ENCODE measurements at regions of chr11 and their contacts with region 1.

Region 1: GRCh38 chr11:63738720-63739360 is 29.7 kb downstream of the ZFTA start:
- DNase-seq: no peak
- H3K4me3 ChIP-seq: no peak overlapping the region
- CTCF ChIP-seq: peak; percentile 70

Region 2: DNA sequence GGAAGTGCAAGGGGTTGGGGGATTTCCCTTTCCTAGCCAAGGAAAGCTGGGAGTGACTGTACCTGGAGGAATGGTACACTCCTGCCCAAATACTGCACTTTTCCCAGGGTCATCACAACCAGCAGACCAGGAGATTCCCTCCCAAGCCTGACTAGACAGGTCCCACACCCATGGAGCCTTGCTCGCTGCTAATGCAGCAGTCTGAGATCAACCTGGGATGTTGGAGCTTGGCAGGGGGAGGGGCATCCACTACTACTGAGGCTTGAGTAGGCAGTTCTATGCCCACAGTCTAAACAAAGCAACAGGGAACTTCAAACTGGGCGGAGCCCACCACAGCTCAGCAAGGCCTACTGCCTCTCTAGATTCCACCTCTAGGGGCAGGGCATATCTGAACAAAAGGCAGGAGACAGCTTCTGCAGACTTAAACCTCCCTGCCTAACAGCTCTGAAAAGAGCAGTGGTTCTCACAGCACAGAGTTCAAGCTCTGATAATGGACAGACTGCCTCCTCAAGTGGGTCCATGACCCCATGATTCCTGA is 310.8 kb before region 1 on chr11:
- CTCF ChIA-PET with region 1: no interaction called
- POLR2A ChIA-PET with region 1: no interaction called
- DNase-seq: no peak
- H3K4me3 ChIP-seq: no peak overlapping the region
- CTCF ChIP-seq: no peak

Region 3: GRCh38 chr11:63592975-63593395 is 145.9 kb before region 1 on chr11:
- CTCF ChIA-PET with region 1: interaction called, 11 read pairs
- POLR2A ChIA-PET with region 1: no interaction called
- DNase-seq: no peak
- H3K4me3 ChIP-seq: no peak overlapping the region
- CTCF ChIP-seq: peak; percentile 82

Region 4: DNA sequence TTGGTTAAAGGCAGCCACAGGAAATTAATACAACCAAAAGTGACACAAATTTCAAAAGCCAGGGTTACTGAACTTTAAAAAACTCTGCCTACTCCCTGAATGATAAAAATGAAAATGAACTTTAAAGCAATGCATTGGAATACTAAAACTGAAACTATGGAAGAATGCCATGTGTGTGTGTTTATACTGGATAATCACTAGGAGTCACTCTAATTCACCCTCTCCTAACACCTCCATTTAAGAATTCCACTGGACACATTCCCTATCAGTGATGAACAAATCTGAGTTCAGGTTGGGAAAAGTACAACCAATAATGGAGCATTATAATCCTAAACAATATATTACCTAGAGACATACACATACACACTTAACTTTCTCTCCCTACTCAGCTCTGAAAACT is 97.1 kb before region 1 on chr11:
- CTCF ChIA-PET with region 1: interaction called, 50 read pairs
- POLR2A ChIA-PET with region 1: no interaction called
- DNase-seq: no peak
- H3K4me3 ChIP-seq: no peak overlapping the region
- CTCF ChIP-seq: no peak

Region 5: DNA sequence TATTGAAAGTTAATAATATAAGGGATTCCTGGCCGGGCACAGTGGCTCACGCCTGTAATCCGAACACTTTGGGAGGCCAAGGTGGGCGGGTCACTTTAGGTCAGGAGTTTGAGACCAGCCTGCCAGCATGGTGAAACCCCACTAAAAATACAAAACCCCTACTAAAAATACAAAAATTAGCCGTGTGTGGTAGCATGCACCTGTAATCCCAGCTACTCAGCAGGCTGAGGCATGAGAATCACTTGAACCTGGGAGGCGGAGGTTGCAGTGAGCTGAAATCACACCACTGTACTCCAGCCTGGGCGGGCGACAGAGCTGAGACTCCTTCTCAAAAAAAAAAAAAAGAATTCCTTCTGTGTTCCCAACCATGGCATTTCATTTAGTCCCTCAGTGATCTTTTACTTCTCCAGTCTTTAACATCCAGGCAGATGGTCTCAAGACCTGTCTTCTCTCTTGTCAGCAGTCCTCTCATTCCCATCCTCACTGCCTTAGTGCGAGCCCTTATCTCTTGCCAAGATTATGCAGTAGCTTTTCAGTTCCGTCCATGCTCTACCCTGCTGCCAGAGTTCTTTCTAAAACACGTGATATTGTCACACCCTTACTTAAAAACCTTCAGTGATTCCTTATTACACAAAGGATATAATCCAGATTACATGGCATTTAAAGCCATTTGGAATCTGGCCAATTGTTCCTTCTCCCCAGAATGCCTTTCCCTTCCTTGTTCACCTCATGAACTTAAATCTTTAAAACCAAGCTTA is 39.7 kb before region 1 on chr11:
- CTCF ChIA-PET with region 1: interaction called, 24 read pairs
- POLR2A ChIA-PET with region 1: no interaction called
- DNase-seq: no peak
- H3K4me3 ChIP-seq: no peak overlapping the region
- CTCF ChIP-seq: no peak

Region 6: DNA sequence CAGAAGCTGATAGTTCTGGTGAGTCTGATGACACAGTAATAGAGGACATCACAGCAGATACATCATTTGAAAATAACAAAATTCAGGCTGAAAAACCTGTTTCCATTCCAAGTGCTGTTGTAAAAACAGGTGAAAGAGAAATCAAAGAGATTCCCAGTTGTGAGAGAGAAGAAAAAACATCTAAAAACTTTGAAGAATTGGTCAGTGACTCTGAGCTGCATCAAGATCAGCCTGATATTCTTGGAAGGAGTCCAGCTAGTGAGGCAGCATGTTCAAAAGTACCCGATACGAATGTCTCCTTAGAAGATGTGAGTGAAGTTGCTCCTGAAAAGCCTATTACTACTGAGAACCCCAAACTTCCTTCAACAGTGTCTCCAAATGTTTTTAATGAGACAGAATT is 18.9 kb before region 1 on chr11:
- CTCF ChIA-PET with region 1: interaction called, 19 read pairs
- POLR2A ChIA-PET with region 1: no interaction called
- DNase-seq: peak; percentile 9
- H3K4me3 ChIP-seq: no peak overlapping the region
- CTCF ChIP-seq: no peak